Posterior cingulate gyrus (tissue), 11 donors: ENCODE measurements at regions of chr15 and their contacts with region 1.

Region 1: DNA sequence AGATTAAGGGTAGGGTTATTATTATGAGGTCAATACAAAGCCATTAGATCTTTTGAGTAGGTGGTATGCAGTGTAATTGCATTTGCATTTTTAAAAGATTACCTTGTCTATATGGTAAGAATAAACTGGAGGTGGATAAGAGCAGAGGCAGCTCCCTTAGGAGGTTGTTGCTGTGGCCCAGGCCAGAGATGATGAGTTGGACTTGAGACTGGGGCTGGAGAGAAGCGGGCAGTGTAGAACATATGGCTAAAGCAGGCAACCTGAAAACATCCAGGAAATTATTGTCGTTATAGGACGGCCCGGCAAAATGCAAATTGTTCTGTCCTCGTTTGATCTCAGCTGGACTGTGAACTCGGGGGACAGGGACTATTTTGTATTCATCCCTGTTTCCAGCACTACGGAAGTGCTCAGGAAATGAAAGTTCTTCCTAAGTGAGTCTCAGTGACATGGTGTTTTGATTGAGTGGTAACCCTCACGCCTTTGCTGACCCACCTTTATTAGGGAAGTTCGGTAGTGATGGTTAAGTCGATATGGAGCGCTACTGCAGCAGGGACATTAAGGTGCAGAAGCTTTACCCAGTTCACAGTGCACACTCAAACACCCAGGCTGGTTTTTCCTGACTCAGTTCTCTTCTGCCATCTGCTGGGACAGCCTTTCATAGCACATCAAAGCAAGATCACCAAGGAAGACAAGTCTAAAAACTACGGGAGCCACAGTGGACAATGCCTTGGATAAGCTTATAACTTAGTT is 27.2 kb upstream of the VPS33B start:
- DNase-seq: peak in 7 of 10 donors; percentile 28 to 89 (median 65)

Region 2: GRCh38 chr15:91099616-91099994 is 50.1 kb after region 1 on chr15:
- intact Hi-C with region 1: no loop called
- DNase-seq: peak in 9 of 10 donors; percentile 41 to 94 (median 63)

Region 3: DNA sequence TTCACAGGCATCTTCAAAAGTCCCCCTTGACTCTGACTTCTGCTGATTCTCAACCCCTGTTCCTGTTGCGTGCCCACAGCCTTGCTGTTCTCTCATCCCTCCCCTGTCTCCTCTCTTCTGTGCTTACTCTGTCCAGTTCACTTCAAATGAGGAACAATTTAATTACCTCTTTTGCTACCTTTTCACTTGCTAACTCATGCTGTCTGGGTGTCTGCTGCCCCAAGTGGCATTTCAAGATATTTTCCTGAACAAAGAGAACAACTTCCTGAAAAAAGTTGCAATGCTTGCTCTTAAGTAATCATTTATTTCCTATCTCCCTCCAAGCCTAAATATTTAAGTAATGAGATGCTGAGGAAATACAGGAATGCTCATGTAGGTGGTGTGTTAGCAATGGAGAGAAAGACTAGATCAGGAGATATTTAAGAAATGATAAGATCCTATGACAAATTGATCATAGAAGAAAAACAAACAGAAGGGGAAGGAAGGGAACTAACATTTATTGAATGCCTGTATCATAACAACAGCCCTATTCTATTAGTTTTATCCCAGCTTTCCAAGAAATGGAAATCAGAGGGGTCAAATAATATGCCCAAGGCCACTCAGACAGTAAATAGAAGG is 92.7 kb after region 1 on chr15:
- intact Hi-C with region 1: loop called (anchors 10 kb)
- DNase-seq: no peak